Common myeloid progenitor, CD34-positive (primary cell): ENCODE measurements at regions of chr1 and their contacts with region 1.

Region 1: GRCh38 chr1:157580179-157580827 is 17.6 kb downstream of the FCRL4 start:
- DNase-seq: peak; percentile 67 to 79 (median 72)
- H3K4me3 ChIP-seq: no peak overlapping the region
- H3K27ac ChIP-seq: no peak overlapping the region
- H3K4me1 ChIP-seq: peaks cover 0 to 11% (median 6%) of the 10 kb centered on the region in 4 experiments
- H3K27me3 ChIP-seq: peaks cover 0 to 21% (median 10%) of the 10 kb centered on the region in 5 experiments

Region 2: GRCh38 chr1:157626099-157626498 is 45.8 kb after region 1 on chr1:
- CTCF ChIA-PET with region 1: interaction called, 19 read pairs
- POLR2A ChIA-PET with region 1: no interaction called
- DNase-seq: peak; percentile 41 to 61 (median 56)
- H3K4me3 ChIP-seq: no peak overlapping the region
- H3K27ac ChIP-seq: no peak overlapping the region
- H3K4me1 ChIP-seq: no peaks in the 10 kb centered on the region
- H3K27me3 ChIP-seq: peaks cover 0 to 23% (median 18%) of the 10 kb centered on the region in 5 experiments

Region 3: GRCh38 chr1:157751283-157751682 is 171.0 kb after region 1 on chr1:
- CTCF ChIA-PET with region 1: interaction called, 10 read pairs
- POLR2A ChIA-PET with region 1: no interaction called
- DNase-seq: no peak
- H3K4me3 ChIP-seq: no peak overlapping the region
- H3K27ac ChIP-seq: no peak overlapping the region
- H3K4me1 ChIP-seq: peaks cover 7 to 11% (median 10%) of the 10 kb centered on the region in 4 experiments
- H3K27me3 ChIP-seq: no peaks in the 10 kb centered on the region

Region 4: DNA sequence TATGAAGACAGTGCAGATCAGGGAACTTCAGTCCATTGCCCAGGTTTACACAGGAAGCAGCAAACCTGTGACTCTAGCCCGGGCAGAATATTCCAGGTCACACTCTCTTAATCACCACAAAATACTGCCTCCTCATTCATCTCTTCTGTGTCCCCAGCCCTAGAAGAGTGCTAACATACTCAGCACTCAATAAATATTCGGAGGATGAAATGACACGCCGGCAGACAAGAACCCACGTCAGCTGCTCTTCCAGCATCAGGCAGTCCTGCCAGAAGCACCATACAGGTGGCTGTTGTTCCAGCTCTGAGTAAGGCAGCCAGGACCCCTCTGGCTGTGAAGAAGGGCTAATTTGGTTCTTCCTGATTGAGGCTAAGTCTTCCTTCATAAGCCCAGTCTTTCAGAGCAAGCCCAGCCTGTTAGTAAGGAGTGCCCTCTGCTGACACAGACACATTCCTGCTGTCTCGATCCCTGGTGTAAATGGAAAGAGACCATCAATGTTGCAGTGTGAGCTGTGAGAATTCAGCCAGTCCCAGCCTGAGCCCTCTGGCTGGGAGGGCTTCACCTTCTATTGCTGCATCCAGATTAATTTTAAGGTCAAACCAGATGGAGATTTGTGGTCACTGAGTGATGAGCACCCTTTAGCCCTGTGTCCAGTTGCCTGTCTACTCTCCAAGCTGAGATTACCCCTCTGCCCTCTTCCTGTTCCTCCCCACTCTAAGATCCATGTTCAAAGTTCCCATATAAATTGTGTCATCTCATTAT is 368.2 kb after region 1 on chr1:
- CTCF ChIA-PET with region 1: interaction called, 22 read pairs
- POLR2A ChIA-PET with region 1: no interaction called
- DNase-seq: peak; percentile 68 to 83 (median 80)
- H3K4me3 ChIP-seq: no peak overlapping the region
- H3K27ac ChIP-seq: no peak overlapping the region
- H3K4me1 ChIP-seq: peaks cover 2 to 11% (median 6%) of the 10 kb centered on the region in 4 experiments
- H3K27me3 ChIP-seq: no peaks in the 10 kb centered on the region

Region 5: DNA sequence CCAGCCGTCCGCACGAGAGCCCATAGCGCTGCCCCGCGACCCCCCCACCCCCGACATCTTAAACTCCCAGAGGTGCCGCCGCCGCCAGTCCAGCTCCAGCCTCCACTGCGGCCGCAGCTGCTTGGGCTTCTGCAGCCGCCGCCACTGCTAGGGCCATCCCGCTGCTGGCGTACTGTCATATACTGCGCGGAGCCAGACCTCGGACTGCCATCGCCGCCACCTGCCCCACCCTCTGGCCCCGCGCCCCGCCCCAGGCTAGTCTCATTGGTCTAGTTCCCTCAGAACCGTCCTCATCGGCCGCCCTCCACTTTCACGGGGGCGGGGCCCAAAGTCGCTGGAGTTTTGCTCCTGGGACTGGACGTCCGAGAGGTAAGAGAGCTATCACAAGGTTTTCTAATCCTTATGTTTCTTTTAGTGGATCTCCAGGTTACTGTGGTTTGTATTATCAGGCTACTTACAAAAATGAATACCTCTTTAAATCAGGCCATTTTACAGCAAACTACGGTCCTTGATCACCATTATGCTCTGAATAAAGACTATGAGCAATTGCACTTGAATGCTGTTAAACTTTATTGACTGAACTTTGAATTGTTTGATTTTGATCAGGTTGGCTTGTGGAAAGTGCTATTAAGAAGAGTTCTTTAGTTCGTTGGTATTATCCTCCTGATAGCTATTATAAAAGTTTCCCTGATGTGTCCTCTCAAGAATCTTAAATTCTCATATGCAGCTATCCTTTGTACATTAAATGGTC is 597.6 kb after region 1 on chr1:
- CTCF ChIA-PET with region 1: no interaction called
- POLR2A ChIA-PET with region 1: no interaction called
- DNase-seq: peak; percentile 30 to 57 (median 33)
- H3K4me3 ChIP-seq: peak overlapping the region in 4 of 7 experiments; percentile 33 to 45 (median 36)
- H3K27ac ChIP-seq: no peak overlapping the region
- H3K4me1 ChIP-seq: peaks cover 5 to 21% (median 14%) of the 10 kb centered on the region in 4 experiments
- H3K27me3 ChIP-seq: peaks cover 0 to 69% (median 25%) of the 10 kb centered on the region in 5 experiments